ENCODE measurements at regions of chr6 and their contacts with region 1.

Region 1: DNA sequence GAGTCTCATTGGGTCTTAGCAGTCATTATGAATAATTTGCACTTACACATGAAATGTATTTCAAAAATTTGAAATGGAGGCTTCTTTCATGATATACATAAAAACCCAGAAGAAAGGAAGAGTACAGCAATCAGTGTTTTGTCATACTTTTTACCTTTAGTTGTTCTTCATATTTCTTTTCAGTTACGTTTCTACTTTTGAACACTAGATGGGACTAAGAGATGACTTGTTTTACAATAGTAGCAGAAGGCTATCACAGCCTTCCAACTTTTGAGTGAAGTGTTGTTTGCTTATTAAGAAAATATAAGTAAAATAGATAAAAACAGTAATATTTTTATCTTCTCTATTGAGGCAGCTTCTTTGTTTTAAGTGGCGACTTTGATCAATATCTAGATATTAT is 58.1 kb downstream of the L3MBTL3 start:
- DNase-seq: no peak
- H3K4me3 Mint-ChIP-seq: no peak overlapping the region
- H3K27ac Mint-ChIP-seq: no peak overlapping the region
- H3K4me1 Mint-ChIP-seq: peaks cover 22% of the 10 kb centered on the region
- H3K27me3 Mint-ChIP-seq: no peaks in the 10 kb centered on the region

Region 2: DNA sequence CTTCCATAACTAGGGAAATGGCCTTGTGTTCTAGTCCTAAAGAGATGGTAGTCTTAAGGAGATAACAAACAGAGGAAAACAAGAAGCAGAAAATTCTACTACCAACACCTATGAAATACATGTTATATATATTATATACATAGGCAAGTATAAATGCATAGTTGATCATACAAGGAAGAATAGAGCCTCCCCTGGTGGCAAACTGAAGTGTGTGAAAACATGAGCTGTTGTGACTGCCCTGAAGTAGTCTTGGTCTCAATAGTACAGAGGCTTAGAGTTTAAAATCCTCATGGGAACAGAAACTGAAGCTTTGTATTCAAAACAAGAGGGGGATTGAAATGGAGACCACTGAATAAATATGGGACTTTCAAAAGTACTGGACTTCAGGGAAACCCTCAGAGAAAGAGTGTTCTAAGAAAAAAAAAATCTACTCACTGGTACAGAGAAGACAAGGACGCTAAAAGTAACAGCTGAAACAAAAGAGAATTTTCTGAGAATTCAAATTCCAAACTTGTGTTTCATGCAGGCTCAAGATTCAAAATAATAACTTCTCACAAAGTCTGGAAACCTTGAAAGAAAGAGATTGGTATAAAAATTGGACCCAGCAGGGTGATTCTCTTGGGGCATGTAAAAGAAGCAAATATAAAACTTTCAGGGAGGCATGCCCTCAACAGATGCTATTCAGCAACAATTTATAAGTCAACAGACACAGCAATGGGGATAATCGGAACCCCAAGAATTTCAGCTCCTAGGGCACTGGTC is 205.9 kb after region 1 on chr6:
- intact Hi-C with region 1: loop called (anchors 1 kb)
- DNase-seq: no peak
- H3K4me3 Mint-ChIP-seq: no peak overlapping the region
- H3K27ac Mint-ChIP-seq: no peak overlapping the region
- H3K4me1 Mint-ChIP-seq: peaks cover 11% of the 10 kb centered on the region
- H3K27me3 Mint-ChIP-seq: no peaks in the 10 kb centered on the region

Measured in activated T-helper 2 cell treated with anti-CD3 and anti-CD28 coated beads, Interferon-gamma antibody, Interleukin-2, Interleukin-4, amounts not matched to agents 10 μg/mL and 5 μg/mL and 100 μg/mL, durations not matched to agents 14 hours and 24 hours and 36 hours (primary cell).